Mammary epithelial cell (primary cell): ENCODE measurements at regions of chr18 and their contacts with region 1.

Region 1: DNA sequence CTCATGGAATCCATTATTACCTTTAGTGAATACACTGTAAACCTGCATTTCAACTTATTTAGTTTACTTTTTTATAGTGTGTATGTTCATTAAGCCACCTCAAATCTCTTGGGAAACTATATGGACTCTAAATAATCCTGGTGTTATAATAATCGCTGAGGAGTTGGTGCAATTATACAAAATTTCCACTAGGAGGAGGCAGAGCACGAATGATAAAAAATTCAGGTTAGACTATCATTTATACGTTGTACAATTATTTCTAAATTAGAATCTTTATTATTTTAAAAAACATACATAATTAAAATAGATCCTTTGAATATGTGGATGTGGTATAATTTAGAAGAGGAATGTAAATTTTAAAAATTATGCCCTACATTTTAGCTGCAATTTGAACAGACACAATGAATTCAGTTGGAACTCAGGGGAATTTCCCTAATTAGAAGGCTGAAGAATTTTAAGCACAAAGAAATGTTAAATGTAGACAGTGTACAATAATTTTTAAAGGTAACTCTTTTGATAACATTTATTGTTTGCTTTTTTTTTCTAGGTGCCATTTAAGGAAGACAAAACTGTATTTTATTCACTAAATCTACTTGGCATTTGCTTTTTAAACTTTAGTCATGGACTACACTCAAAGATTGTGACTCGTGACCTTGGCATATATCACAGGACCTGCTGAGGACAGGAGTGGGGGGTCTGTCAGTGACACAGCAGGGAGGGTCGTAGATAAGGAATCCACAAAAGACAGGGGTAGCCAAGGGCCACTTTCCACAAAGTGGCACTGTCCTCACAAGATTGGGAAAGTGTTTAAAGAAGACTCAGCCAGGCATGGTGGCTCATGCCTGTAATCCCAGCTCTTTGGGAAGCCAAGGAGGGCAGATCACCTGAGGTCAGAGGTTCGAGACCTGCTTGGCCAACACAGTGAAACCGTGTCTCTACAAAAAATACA is 45.5 kb downstream of the RAB12 start:
- DNase-seq: no peak
- H3K4me3 ChIP-seq: no peak overlapping the region
- H3K27ac ChIP-seq: no peak overlapping the region
- H3K4me1 ChIP-seq: peaks cover 11% of the 10 kb centered on the region
- H3K27me3 ChIP-seq: no peaks in the 10 kb centered on the region
- CTCF ChIP-seq: peak; percentile 69 to 71

Region 2: GRCh38 chr18:8001711-8002301 is 653.0 kb before region 1 on chr18:
- CTCF ChIA-PET with region 1: no interaction called
- dilution Hi-C with region 1: no loop called
- in situ Hi-C with region 1: no loop called
- intact Hi-C with region 1: no loop called
- DNase-seq: no peak
- H3K4me3 ChIP-seq: no peak overlapping the region
- H3K27ac ChIP-seq: no peak overlapping the region
- H3K4me1 ChIP-seq: no peaks in the 10 kb centered on the region
- H3K27me3 ChIP-seq: no peaks in the 10 kb centered on the region
- CTCF ChIP-seq: no peak

Region 3: DNA sequence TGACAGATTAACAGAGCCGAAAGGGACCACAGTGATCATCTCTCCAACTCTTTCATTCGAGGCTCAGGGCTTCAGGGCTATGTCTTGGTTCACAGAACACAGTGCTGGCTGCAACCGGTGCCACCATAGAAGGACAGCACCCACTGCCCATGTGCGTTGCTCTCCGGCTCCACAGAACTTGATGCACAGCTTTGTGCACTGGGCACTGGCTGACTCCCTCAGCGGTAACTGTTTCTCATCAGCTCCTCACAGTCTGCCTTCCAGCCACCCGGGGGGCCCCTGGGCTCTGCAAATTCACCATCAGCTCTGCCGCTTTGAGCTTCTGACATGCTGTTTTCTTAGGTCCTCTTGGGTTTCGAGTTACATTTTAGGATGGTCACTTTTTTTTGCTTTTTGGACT is 169.8 kb before region 1 on chr18:
- CTCF ChIA-PET with region 1: no interaction called
- dilution Hi-C with region 1: no loop called
- in situ Hi-C with region 1: no loop called
- intact Hi-C with region 1: no loop called
- DNase-seq: no peak
- H3K4me3 ChIP-seq: no peak overlapping the region
- H3K27ac ChIP-seq: no peak overlapping the region
- H3K4me1 ChIP-seq: no peaks in the 10 kb centered on the region
- H3K27me3 ChIP-seq: no peaks in the 10 kb centered on the region
- CTCF ChIP-seq: no peak

Region 4: GRCh38 chr18:8696749-8697211 is 42.0 kb after region 1 on chr18:
- CTCF ChIA-PET with region 1: no interaction called
- dilution Hi-C with region 1: no loop called
- in situ Hi-C with region 1: no loop called
- intact Hi-C with region 1: loop called (anchors 1 kb)
- DNase-seq: peak; percentile 48
- H3K4me3 ChIP-seq: no peak overlapping the region
- H3K27ac ChIP-seq: no peak overlapping the region
- H3K4me1 ChIP-seq: peaks cover 4% of the 10 kb centered on the region
- H3K27me3 ChIP-seq: no peaks in the 10 kb centered on the region
- CTCF ChIP-seq: peak; percentile 78 to 87

Region 5: DNA sequence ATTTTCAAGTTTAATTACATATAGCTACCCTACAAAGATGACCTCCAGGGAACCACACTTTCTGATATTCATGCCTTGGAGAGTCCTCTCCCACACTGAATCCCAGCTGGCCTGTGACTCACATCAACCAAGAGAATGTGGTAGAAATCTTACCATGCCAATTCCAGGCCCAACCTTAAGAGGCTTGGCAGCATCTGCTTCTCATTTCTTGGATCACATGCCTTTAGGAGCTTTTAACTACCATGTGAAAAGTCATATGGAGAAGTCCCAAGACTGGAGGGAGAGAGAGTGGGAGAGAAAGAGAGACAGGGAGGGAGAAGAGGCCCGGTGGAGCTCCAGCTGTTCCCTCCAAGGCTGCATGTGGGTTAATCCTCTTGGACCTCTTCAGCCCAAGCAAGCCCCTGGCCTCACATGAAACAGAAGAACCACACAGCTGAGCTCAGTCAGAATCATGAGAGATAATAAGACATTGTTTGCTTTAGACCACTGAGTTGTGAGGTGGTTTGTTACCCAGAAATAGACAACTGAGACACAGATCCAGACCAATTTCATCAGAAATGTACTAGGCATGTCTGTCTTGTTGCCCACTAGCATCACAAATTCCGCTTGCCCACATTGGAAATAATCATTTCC is 241.3 kb after region 1 on chr18:
- CTCF ChIA-PET with region 1: no interaction called
- dilution Hi-C with region 1: no loop called
- in situ Hi-C with region 1: no loop called
- intact Hi-C with region 1: no loop called
- DNase-seq: peak; percentile 74
- H3K4me3 ChIP-seq: no peak overlapping the region
- H3K27ac ChIP-seq: no peak overlapping the region
- H3K4me1 ChIP-seq: peaks cover 10% of the 10 kb centered on the region
- H3K27me3 ChIP-seq: no peaks in the 10 kb centered on the region
- CTCF ChIP-seq: no peak

Region 6: DNA sequence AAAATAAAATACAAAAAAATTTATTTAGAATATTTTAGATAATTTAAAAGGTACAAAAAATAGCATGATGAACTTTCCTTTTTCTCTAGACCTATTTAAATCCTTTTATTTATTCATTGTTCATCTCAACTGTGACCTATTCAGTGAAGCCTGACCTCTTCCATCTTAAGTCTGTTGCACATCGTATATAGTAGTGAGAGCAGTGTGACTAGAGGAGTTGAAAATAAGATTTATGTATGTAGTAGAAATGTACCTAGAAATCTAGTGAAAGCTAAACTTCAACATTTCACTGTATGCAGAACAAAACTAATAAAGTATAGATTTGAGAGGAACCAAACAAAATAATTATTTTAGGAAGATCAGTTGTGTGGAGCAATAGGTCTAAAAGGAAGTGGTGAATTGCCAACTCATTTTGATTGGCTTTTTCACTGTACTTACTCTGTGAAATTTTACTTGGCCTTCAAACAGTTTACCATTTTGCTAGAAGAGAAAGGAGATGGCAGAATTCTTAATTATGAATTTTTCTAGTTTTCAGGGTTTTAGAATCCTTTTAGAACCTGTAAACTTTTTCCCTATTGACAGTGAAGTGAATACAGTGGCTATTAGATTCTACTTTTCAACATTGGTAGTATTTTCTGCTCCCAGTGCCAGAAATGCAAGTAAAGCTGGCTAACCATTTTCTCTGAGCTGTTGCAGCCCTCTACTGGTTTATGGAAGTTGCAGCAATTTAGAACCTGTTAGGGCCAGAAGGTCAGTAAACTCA is 492.8 kb after region 1 on chr18:
- CTCF ChIA-PET with region 1: no interaction called
- dilution Hi-C with region 1: no loop called
- in situ Hi-C with region 1: no loop called
- intact Hi-C with region 1: loop called (anchors 1 kb)
- DNase-seq: peak; percentile 62
- H3K4me3 ChIP-seq: no peak overlapping the region
- H3K27ac ChIP-seq: peak overlapping the region; percentile 60
- H3K4me1 ChIP-seq: peaks cover 12% of the 10 kb centered on the region
- H3K27me3 ChIP-seq: no peaks in the 10 kb centered on the region
- CTCF ChIP-seq: peak; percentile 62 to 86

Region 7: GRCh38 chr18:9334329-9334972 is 679.7 kb after region 1 on chr18 and contains the start of gene TWSG1:
- CTCF ChIA-PET with region 1: no interaction called
- dilution Hi-C with region 1: no loop called
- in situ Hi-C with region 1: no loop called
- intact Hi-C with region 1: loop called (anchors 1 kb)
- DNase-seq: peak; percentile 91
- H3K4me3 ChIP-seq: peak within 1 kb of the TSS; percentile 64 to 76 (median 65)
- H3K27ac ChIP-seq: peak within 1 kb of the TSS; percentile 63
- H3K4me1 ChIP-seq: peaks cover 10% of the 10 kb centered on the region
- H3K27me3 ChIP-seq: no peaks in the 10 kb centered on the region
- CTCF ChIP-seq: peak in 1 of 2 donors; percentile 55
- total RNA-seq, gene TWSG1: 41.0 to 63.8 TPM